Ascending aorta (tissue), 2 donors: ENCODE measurements at regions of chr1 and their contacts with region 1.

Region 1: GRCh38 chr1:77126307-77126706 is 92.9 kb downstream of the PIGK start:
- DNase-seq: no peak
- H3K4me3 ChIP-seq: no peak overlapping the region
- H3K27ac ChIP-seq: no peak overlapping the region
- H3K4me1 ChIP-seq: no peaks in the 10 kb centered on the region
- H3K27me3 ChIP-seq: no peaks in the 10 kb centered on the region
- CTCF ChIP-seq: peak; percentile 19 to 66 (median 44)

Region 2: DNA sequence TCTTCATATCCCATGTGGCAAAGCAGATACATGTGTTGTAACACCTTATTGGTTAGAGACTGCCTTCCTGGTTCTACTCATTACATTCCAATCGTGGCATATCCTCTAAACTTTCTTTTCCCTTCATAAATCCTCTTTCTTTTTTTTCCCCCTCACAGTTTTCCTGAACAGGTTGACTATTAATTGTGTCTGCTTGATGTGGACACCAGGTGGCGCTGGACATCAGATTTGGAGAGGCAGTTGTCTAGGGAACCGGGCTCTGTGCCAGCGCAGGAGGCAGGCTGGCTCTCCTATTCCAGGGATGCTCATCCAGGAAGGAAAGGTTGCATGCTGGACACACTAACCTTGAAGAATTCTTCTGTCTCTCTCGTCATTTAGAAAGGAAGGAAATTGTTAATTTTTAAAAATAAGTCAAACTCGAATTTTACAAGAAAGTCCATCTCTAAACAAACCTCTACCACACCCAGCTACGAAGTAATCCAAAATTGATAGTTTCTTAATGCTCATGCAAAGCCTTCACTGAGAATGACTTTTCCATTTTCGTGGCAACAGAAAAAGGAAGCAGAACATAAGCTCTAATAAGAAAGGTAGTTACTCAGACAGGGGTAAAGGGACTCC is 1134.7 kb before region 1 on chr1:
- intact Hi-C with region 1: loop called (anchors 5 kb)
- DNase-seq: peak; percentile 22 to 87
- H3K4me3 ChIP-seq: no peak overlapping the region
- H3K27ac ChIP-seq: no peak overlapping the region
- H3K4me1 ChIP-seq: no peaks in the 10 kb centered on the region
- H3K27me3 ChIP-seq: no peaks in the 10 kb centered on the region
- CTCF ChIP-seq: peak; percentile 56 to 77 (median 61)

Region 3: DNA sequence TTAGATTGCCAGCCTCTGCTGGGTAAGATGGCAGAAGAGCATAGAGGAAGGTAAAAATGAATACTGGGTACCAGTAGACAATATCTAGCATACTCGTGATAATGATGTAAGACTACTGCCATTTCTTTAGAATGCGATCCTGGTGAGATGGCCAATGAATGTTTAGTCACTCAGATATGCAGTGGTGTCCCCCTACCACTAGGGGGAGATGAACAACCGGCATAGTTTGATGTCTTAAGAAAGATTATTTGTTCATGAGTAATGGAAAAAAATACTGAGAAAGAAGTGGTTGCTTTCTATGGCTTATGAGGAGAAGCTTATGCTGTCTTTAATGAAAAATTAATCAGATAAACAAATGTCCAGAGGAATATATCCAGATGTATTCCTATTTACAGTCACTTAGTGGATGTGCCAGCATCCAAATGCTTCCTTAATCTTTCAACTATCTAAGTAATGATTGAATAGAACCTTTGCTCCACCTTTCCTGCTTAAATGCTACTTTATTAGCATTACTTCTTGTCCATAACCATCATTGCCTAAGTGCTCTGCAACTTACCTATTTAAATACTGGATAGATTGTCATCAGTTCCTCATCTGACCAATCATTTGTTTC is 795.2 kb before region 1 on chr1:
- intact Hi-C with region 1: loop called (anchors 5 kb)
- DNase-seq: no peak
- H3K4me3 ChIP-seq: no peak overlapping the region
- H3K27ac ChIP-seq: no peak overlapping the region
- H3K4me1 ChIP-seq: no peaks in the 10 kb centered on the region
- H3K27me3 ChIP-seq: no peaks in the 10 kb centered on the region
- CTCF ChIP-seq: peak; percentile 54 to 87 (median 74)

Region 4: GRCh38 chr1:76998582-76999223 is 127.6 kb before region 1 on chr1:
- intact Hi-C with region 1: no loop called
- DNase-seq: no peak
- H3K4me3 ChIP-seq: no peak overlapping the region
- H3K27ac ChIP-seq: no peak overlapping the region
- H3K4me1 ChIP-seq: no peaks in the 10 kb centered on the region
- H3K27me3 ChIP-seq: no peaks in the 10 kb centered on the region
- CTCF ChIP-seq: no peak